Common myeloid progenitor, CD34-positive (primary cell): ENCODE measurements at regions of chr18 and their contacts with region 1.

Region 1: GRCh38 chr18:2948038-2948437 is 64.9 kb downstream of the LPIN2 start:
- DNase-seq: peak; percentile 47 to 71 (median 59)
- H3K4me3 ChIP-seq: no peak overlapping the region
- H3K27ac ChIP-seq: no peak overlapping the region
- H3K4me1 ChIP-seq: peaks cover 0 to 5% (median 0%) of the 10 kb centered on the region in 4 experiments
- H3K27me3 ChIP-seq: no peaks in the 10 kb centered on the region

Region 2: GRCh38 chr18:2971741-2972552 is 23.9 kb after region 1 on chr18:
- CTCF ChIA-PET with region 1: interaction called, 12 read pairs
- POLR2A ChIA-PET with region 1: no interaction called
- DNase-seq: peak in 2 of 3 donors; percentile 81 to 87
- H3K4me3 ChIP-seq: peak overlapping the region in 6 of 7 experiments; percentile 8 to 73 (median 60)
- H3K27ac ChIP-seq: peak overlapping the region; percentile 41 to 86
- H3K4me1 ChIP-seq: peaks cover 42 to 72% (median 59%) of the 10 kb centered on the region in 4 experiments
- H3K27me3 ChIP-seq: no peaks in the 10 kb centered on the region